ENCODE measurements at regions of chr9 and their contacts with region 1.

Region 1: GRCh38 chr9:13688994-13689600 is 409.6 kb upstream of the MPDZ start:
- DNase-seq: peak; percentile 12
- ATAC-seq: peak; percentile 14
- H3K4me3 Mint-ChIP-seq: no peak overlapping the region
- H3K27ac Mint-ChIP-seq: peak overlapping the region; percentile 97; the same call in 1 of the 2 replicates
- H3K4me1 Mint-ChIP-seq: peaks cover 26% of the 10 kb centered on the region
- H3K27me3 Mint-ChIP-seq: no peaks in the 10 kb centered on the region
- CTCF ChIP-seq: no peak

Region 2: DNA sequence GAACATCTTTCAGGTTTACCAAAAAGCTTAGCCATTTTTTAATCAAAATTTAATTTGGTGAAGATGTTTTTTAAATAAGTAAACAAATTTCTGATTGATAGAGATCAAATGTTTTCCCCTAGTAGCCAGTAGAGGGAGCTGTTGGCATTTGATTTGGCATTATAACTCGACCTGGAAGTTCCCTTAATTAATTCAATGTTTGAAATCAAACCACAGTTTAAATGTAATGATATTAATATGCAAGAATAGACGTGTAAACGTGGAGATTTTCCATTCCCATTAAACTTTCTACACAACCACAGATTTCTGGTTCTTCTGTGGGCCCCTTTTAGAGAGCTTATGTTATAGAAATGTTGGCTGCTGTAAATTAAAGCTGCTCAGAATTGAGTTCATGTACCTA is 261.5 kb before region 1 on chr9:
- CTCF ChIA-PET with region 1: interaction called, 14 read pairs
- POLR2A ChIA-PET with region 1: no interaction called
- DNase-seq: no peak
- ATAC-seq: no peak
- H3K4me3 Mint-ChIP-seq: no peak overlapping the region
- H3K27ac Mint-ChIP-seq: no peak overlapping the region
- H3K4me1 Mint-ChIP-seq: peaks cover 42% of the 10 kb centered on the region
- H3K27me3 Mint-ChIP-seq: no peaks in the 10 kb centered on the region
- CTCF ChIP-seq: peak; percentile 58; the same call in 1 of the 2 replicates

Measured in WTC11 (cell line).